ENCODE measurements at regions of chr14 and their contacts with region 1.

Region 1: DNA sequence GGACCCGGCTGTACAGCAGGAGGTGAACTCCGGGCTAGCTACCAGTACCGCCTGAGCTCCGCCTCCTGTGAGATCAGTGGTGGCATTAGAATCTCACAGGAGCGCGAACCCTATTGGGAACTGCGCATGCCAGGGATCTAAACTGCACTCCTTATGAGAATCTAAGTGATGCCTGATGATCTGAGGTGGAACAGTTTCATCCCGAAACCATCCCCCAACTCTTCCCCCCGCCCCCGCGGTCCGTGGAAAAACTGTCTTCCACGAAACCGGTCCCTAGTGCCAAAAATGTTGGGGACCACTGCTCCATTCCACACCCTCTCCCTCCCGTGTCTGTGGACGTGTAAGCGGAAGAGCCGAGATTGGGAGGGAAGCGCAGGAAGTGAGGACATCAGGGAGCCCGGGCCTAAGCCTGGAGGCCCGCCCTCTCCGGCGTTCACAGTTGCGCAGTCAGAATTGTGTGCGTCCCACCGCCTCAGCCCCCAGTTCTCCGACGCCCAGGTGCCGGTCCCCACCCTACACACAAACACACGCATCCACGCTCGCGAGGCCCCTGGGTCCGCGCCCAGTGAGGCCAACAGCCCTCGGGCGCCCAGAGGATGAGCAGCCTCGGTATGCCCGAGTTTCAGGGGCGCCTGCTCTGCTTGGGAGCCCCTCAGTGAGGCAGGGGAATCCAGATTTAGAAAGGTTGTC is 1.8 kb upstream of the RNASE4 start:
- DNase-seq: peak; percentile 87
- H3K4me3 ChIP-seq: peak overlapping the region; percentile 87 to 91 (median 89)
- H3K27ac ChIP-seq: peak overlapping the region; percentile 92
- H3K4me1 ChIP-seq: peaks cover 22% of the 10 kb centered on the region
- H3K27me3 ChIP-seq: no peaks in the 10 kb centered on the region
- CTCF ChIP-seq: peak in 1 of 2 donors; percentile 31

Region 2: GRCh38 chr14:20413045-20413799 is 269.4 kb before region 1 on chr14 and contains the start of gene TEP1:
- CTCF ChIA-PET with region 1: no interaction called
- dilution Hi-C with region 1: no loop called
- in situ Hi-C with region 1: no loop called
- intact Hi-C with region 1: loop called (anchors 5 kb)
- DNase-seq: peak; percentile 87
- H3K4me3 ChIP-seq: peak within 1 kb of the TSS; percentile 92 to 98 (median 97)
- H3K27ac ChIP-seq: peak within 1 kb of the TSS; percentile 81
- H3K4me1 ChIP-seq: peaks cover 11% of the 10 kb centered on the region
- H3K27me3 ChIP-seq: no peaks in the 10 kb centered on the region
- CTCF ChIP-seq: no peak
- total RNA-seq, gene TEP1: 27.5 to 28.1 TPM

Region 3: DNA sequence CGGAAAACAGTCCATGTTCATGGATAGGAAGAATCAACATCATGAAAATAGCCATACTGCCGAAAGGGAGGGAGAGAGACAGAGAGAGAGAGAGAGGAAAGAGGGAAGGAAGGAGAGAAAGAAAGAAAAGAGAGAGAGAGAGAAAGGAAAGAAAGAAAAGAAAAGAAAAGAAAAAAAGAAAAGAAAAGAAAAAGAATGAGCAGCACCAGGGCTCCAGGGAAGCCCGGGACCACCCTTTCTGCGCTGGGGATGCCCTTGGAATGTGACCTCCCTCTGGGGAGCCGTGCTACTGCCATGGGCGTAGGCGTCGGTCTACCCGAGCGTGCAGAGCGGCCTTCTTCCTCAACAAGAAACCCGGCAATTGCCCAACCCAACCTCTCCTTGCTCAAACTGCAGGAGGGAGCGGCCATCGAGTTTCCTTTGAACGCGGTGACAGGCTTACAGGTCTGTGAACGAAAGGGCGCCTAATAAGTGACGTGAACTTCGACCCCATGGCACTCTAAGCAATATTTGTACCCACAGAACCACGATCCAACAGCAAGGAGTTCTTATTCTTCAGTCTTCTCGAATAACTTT is 58.0 kb before region 1 on chr14:
- CTCF ChIA-PET with region 1: no interaction called
- dilution Hi-C with region 1: no loop called
- in situ Hi-C with region 1: no loop called
- intact Hi-C with region 1: loop called (anchors 2 kb)
- DNase-seq: peak; percentile 60
- H3K4me3 ChIP-seq: peak overlapping the region; percentile 31 to 60 (median 57)
- H3K27ac ChIP-seq: peak overlapping the region; percentile 35
- H3K4me1 ChIP-seq: peaks cover 11% of the 10 kb centered on the region
- H3K27me3 ChIP-seq: no peaks in the 10 kb centered on the region
- CTCF ChIP-seq: no peak

Region 4: DNA sequence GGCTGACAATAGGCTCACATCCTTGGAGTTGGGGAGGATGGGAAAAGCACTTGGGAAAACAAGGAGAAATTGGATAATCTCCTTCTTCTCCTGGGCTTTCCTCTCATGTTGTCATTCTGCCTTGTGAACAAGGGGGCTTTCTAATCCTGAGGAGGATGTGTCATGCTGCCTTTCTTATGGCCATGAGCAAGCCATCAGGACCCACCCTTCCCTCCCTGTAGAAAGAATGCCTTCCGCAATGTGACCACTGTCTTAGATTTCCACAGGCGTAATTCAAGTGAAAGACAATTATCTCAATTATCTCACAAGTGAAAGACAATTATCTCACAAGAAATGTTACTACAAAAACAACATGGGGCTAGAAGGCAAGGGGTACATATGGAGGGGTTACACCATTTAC is 38.1 kb before region 1 on chr14:
- CTCF ChIA-PET with region 1: interaction called, 4 read pairs
- dilution Hi-C with region 1: loop called (anchors 5 kb)
- in situ Hi-C with region 1: no loop called
- intact Hi-C with region 1: no loop called
- DNase-seq: no peak
- H3K4me3 ChIP-seq: no peak overlapping the region
- H3K27ac ChIP-seq: no peak overlapping the region
- H3K4me1 ChIP-seq: no peaks in the 10 kb centered on the region
- H3K27me3 ChIP-seq: no peaks in the 10 kb centered on the region
- CTCF ChIP-seq: no peak

Region 5: DNA sequence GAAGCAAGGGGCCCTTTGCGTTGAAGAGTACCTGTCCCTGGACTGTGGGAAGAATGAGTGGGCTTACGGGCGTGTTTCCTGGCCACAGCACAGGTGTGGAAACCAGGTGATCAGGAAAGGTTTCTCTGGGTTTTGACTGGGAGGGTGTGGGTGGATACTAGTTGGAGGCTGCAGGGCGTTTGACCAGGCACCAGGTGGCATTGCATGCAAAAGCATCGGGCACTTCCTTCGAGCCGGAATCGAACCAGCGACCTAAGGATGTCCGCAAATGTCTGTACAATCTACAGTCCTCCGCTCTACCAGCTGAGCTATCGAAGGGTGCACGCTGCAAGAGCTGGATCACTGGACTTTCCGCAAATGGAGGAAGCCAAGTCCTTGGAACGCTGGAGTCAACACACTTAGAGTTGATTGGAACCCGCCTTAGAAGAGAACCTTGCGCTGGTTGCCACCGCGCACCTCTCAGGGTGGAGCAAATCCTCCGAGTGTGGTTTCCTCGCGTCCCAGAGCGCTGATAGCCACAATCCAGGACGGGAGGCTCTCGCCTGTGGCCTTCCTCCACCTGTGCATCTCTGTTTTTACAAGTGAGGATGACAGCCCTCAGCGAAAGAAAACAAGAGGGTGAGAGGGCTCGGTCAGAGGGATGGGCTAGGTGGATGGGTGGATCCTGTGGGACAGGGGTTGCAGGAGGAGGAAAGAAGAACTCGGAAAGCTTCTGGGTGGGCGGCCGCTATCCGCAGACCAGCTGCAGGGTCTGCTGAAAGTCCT is 19.4 kb before region 1 on chr14:
- CTCF ChIA-PET with region 1: interaction called, 4 read pairs
- dilution Hi-C with region 1: no loop called
- in situ Hi-C with region 1: no loop called
- intact Hi-C with region 1: loop called (anchors 1 kb)
- DNase-seq: peak; percentile 89
- H3K4me3 ChIP-seq: peak overlapping the region; percentile 20 to 44 (median 43)
- H3K27ac ChIP-seq: no peak overlapping the region
- H3K4me1 ChIP-seq: no peaks in the 10 kb centered on the region
- H3K27me3 ChIP-seq: no peaks in the 10 kb centered on the region
- CTCF ChIP-seq: peak; percentile 41 to 78

Measured in mammary epithelial cell (primary cell).